Heart left ventricle (tissue), 16 donors: ENCODE measurements at regions of chr12 and their contacts with region 1.

Region 1: DNA sequence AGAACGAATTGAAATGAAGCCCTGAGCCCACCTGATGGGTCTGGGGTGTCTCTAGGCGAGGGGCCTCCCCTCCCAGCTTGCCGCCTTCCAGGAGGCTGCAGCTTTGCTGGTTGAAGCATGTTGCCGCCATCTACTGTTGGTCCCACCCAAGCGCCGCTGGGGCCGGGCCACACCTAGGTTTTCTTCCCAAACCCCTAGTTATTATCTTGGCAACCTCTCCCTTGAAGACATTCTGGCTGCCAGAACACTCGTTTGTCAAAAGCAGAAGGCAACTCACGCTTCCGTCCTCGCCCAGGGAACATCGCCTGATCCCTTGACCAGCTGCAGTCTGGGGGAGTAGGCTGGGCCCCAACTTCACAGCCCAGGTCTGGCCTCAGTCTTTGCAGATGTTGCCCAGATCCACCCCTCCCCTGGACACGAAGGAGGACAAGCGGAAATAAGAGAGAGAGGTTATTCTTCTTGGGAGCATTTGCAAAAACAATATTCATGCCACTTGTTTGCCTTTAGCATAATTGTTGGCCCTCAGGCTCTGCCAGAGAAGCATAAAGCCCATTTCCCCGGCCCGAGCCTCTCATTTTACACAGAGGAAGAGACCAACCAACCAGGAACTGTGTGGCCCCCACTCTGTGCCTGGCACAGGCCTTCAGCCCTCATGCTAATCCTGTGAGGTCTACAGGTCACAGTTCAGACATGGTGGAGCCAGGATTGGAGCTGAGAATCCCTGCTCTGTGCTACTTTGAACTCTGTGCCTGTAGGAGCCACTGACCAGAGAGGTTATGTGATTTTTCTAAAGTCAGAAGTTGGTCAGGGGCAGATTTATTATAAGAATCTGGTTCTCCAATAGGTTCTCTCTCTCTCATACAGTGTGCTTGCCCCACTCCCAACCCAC is 6.8 kb downstream of the EMP1 start:
- DNase-seq: peak; percentile 57 to 75 (median 64)
- ATAC-seq: peak; percentile 24 to 58 (median 54)
- H3K4me3 ChIP-seq: peak overlapping the region in 9 of 12 donors; percentile 6 to 85 (median 20)
- H3K27ac ChIP-seq: peak overlapping the region; percentile 36 to 93 (median 68)
- H3K4me1 ChIP-seq: peaks cover 6 to 98% (median 80%) of the 10 kb centered on the region in 12 donors
- H3K27me3 ChIP-seq: no peaks in the 10 kb centered on the region
- CTCF ChIP-seq: peak in 9 of 12 donors; percentile 14 to 62 (median 37)
- POLR2A ChIP-seq: no peak

Region 2: DNA sequence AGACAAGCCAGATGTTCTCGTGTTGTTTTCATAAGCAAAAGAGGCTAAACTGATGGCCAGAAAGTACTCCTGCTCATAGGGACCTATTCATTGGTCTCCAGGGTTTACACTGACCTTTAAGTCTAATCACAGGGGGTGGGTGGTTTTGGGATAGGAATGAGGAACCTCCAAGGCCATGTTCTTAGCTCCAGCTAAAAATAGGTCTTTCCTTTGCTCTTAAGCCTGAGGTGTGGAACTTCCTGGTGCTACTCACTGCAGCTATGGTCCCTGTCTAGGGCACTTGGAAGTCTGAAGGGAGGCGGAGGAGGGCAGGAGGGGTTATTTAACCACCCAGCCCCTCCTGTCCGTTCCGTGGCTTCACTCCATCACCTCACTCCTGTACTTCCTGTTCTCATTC is 293.3 kb before region 1 on chr12:
- intact Hi-C with region 1: loop called in 1 of 10 experiments (anchors 5 kb)
- DNase-seq: no peak
- ATAC-seq: peak in 3 of 4 donors; percentile 79 to 92 (median 90)
- H3K4me3 ChIP-seq: no peak overlapping the region
- H3K27ac ChIP-seq: peak overlapping the region in 9 of 12 donors; percentile 1 to 60 (median 15)
- H3K4me1 ChIP-seq: peaks cover 0 to 15% (median 7%) of the 10 kb centered on the region in 12 donors
- H3K27me3 ChIP-seq: peaks cover 0 to 6% (median 0%) of the 10 kb centered on the region in 9 donors
- CTCF ChIP-seq: no peak
- POLR2A ChIP-seq: no peak

Region 3: GRCh38 chr12:13049816-13050215 is 153.5 kb before region 1 on chr12:
- intact Hi-C with region 1: loop called in 1 of 10 experiments (anchors 5 kb)
- DNase-seq: no peak
- ATAC-seq: no peak
- H3K4me3 ChIP-seq: no peak overlapping the region
- H3K27ac ChIP-seq: no peak overlapping the region
- H3K4me1 ChIP-seq: peaks cover 0 to 27% (median 8%) of the 10 kb centered on the region in 12 donors
- H3K27me3 ChIP-seq: no peaks in the 10 kb centered on the region
- CTCF ChIP-seq: no peak
- POLR2A ChIP-seq: no peak

Region 4: DNA sequence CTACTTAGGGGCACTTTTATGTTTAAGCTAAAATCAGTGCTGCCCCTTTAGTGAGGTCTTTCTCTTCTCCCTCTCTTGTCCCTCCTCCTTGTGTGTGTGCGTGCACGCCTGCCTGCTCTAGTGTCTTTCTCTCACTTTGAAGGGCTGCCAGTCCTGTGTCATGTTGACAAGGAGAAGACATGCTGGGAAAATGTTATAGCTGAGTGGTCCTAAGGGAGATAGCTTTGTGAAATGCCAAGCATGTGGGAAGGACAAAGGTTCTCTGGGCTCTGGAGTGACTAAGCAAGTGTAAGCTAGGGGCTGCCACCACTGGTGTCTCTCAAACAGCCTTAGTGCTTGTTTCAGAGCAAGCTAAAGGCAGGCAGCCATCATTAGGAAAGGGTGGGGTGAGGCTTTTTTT is 101.6 kb after region 1 on chr12:
- intact Hi-C with region 1: no loop called
- DNase-seq: no peak
- ATAC-seq: peak in 1 of 4 donors; percentile 18
- H3K4me3 ChIP-seq: no peak overlapping the region
- H3K27ac ChIP-seq: no peak overlapping the region
- H3K4me1 ChIP-seq: no peaks in the 10 kb centered on the region
- H3K27me3 ChIP-seq: peaks cover 0 to 4% (median 0%) of the 10 kb centered on the region in 9 donors
- CTCF ChIP-seq: no peak
- POLR2A ChIP-seq: no peak

Region 5: GRCh38 chr12:13702381-13702780 is 499.1 kb after region 1 on chr12:
- intact Hi-C with region 1: no loop called
- DNase-seq: no peak
- ATAC-seq: no peak
- H3K4me3 ChIP-seq: no peak overlapping the region
- H3K27ac ChIP-seq: no peak overlapping the region
- H3K4me1 ChIP-seq: no peaks in the 10 kb centered on the region
- H3K27me3 ChIP-seq: peaks cover 0 to 7% (median 0%) of the 10 kb centered on the region in 9 donors
- CTCF ChIP-seq: no peak
- POLR2A ChIP-seq: no peak